ENCODE measurements at regions of chr6 and their contacts with region 1.

Region 1: GRCh38 chr6:4125936-4126864 is 9.2 kb downstream of the ECI2 start:
- DNase-seq: no peak
- ATAC-seq: peak; percentile 70

Region 2: DNA sequence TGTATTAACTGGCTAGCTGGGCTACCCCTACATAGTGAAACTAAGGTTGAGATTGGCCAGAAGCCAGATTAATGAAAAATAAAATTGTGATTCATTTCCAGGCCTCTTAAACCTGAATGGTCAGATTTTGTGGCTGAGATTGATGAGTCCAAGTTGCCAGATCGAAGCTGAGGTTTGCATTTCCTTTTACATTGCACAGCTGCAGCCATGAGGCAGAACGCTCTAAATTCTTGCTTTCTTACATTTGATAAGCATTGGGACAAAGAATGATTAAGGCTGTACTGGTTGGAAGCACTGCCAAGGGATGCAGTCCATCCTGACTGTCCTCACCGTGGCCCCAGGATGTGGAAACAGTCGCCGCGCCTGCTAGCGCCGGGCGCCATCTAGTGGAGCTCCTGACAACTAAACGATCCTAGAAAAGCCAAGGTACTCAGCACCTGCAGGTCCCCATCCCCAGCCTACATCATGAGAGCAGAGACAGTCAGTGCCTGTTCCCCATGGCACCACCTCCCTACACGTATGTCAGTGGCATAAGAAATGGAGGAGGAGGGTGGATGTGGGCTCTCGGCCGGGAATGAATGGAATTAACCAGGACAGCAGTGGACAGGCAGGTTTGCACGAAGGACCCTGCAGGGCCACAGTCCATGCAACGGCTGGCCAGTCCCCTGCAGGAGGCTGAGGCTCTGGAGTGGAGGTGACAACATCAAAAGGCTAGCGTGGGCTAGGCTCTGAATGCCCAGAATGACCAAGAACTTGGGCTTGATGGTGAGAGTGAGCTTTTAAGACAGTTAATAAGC is 393.7 kb before region 1 on chr6:
- intact Hi-C with region 1: no loop called
- DNase-seq: peak; percentile 80
- ATAC-seq: peak; percentile 79

Region 3: DNA sequence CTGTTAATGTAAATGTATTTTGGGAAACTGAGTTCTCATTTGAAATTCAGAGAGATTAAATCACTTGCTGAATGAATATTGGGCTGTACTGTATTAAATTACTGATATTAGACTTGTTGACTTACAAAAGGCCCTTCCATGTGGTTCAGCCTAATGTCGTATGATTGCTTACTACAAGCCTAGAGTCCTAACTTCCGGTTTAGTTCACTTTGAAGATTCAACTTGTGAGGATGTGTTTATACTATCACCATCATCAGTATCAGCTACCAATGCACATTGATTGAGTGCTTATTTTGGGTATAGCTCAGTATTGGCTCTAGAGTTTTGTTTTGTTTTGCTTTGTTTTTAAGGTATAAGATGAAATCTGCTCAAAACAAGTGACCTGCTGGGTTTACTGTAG is 95.5 kb before region 1 on chr6:
- intact Hi-C with region 1: no loop called
- DNase-seq: no peak
- ATAC-seq: no peak

Region 4: DNA sequence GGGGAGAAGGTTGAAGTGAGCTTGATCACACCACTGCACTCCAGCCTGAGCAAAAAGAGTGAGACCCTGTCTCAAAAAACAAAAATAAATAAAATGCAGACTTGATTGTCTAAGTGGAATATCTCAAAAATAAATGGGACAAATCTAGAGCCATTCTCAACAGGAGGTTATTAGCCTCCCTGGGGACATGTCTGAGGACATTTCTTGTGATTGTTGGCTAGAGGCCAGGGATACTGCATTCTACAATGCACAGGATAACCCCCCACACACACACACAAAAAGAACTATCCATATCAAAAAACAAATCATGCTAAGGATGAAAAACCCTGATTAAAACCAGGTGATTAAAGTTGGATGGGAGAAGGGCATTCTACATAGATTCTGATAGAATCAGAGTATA is 84.7 kb before region 1 on chr6:
- intact Hi-C with region 1: loop called (anchors 10 kb)
- DNase-seq: no peak
- ATAC-seq: no peak

Region 5: GRCh38 chr6:4225161-4225872 is 99.1 kb after region 1 on chr6:
- intact Hi-C with region 1: no loop called
- DNase-seq: no peak
- ATAC-seq: no peak

Region 6: DNA sequence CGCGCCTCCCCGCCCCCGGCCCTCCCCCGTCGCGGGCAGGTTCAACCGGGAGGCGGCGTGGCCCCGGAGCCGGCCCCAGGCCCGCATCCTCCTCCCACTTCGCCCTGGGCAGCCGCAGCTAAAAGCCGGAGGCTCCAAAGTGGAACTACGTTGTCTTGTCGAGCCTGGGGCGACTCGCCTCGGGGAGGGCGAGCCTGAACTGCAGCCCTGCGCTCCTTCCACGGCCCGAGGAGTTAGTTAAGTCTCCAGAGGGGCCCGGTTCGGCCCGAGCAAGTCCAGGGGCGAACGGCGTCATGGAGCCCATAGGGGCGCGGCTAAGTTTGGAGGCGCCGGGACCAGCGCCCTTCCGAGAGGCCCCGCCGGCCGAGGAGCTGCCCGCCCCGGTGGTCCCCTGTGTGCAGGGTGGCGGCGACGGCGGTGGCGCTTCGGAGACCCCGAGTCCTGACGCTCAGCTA is 959.0 kb after region 1 on chr6 and contains the start of gene PPP1R3G:
- intact Hi-C with region 1: no loop called
- DNase-seq: peak; percentile 76
- ATAC-seq: peak; percentile 76
- total RNA-seq, gene PPP1R3G: 13.9 TPM

Measured in left ventricle myocardium superior (tissue), 1 donor.